Dorsolateral prefrontal cortex (tissue), 120 donors: ENCODE measurements at regions of chr10 and their contacts with region 1.

Region 1: GRCh38 chr10:72364239-72364777 is 9.6 kb upstream of the DNAJB12 start:
- DNase-seq: peak; percentile 71 to 89 (median 84)
- H3K4me3 ChIP-seq: peak overlapping the region in 50 of 59 donors; percentile 1 to 59 (median 32)
- H3K27ac ChIP-seq: peak overlapping the region in 35 of 59 donors; percentile 23 to 88 (median 55)
- H3K27me3 ChIP-seq: no peaks in the 10 kb centered on the region
- CTCF ChIP-seq: peak; percentile 65 to 98 (median 94)

Region 2: GRCh38 chr10:72204296-72204695 is 160.0 kb before region 1 on chr10:
- intact Hi-C with region 1: no loop called
- DNase-seq: no peak
- H3K4me3 ChIP-seq: no peak overlapping the region
- H3K27ac ChIP-seq: no peak overlapping the region
- H3K27me3 ChIP-seq: no peaks in the 10 kb centered on the region
- CTCF ChIP-seq: no peak

Region 3: GRCh38 chr10:72834183-72834825 is 470.0 kb after region 1 on chr10:
- intact Hi-C with region 1: loop called (anchors 2 to 5 kb)
- DNase-seq: peak in 4 of 10 donors; percentile 19 to 66 (median 55)
- H3K4me3 ChIP-seq: no peak overlapping the region
- H3K27ac ChIP-seq: no peak overlapping the region
- H3K27me3 ChIP-seq: no peaks in the 10 kb centered on the region
- CTCF ChIP-seq: peak; percentile 50 to 94 (median 78)